ENCODE measurements at regions of chr7 and their contacts with region 1.

Region 1: GRCh38 chr7:44858161-44858560 is 10.3 kb upstream of the H2AZ2 start:
- DNase-seq: no peak
- H3K4me3 ChIP-seq: no peak overlapping the region
- H3K27ac ChIP-seq: no peak overlapping the region
- H3K4me1 ChIP-seq: peaks cover 0 to 9% (median 0%) of the 10 kb centered on the region in 4 donors
- H3K27me3 ChIP-seq: peaks cover 0 to 10% (median 0%) of the 10 kb centered on the region in 3 donors
- CTCF ChIP-seq: peak in 2 of 7 experiments; percentile 12 to 21
- EP300 ChIP-seq: no peak
- POLR2A ChIP-seq: no peak

Region 2: DNA sequence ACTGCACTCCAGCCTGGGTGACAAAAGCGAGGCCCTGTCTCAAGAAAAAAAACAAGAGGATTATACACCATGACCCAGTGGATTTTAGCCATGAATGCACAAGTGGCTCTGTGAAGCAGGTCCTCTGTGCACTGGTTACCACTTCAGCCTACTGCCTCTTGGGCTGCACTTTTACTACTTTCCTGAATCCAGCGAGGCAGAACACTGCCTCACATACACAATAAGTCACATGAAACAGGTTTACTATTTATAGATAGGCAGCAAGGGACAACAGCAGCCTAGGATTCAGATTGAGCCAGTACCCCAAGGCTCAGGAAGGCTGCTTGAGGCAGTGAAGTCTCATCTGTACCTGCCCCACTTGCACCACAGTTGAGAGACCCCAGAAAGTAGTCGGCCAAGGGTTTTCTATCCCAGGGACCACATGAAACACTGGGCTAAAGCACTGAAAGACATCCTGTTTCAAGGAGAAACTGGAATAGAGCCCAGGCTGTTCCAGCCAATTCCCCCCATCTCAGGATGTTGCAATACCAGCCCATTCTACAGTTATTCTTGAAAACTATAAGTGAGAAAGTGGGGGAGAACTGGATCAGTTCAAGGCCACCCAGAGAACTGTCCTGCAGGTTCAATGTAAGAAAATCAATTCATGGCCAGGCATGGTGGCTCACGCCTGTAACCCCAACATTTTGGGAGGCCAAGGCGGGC is 262.1 kb before region 1 on chr7:
- intact Hi-C with region 1: loop called (anchors 10 kb)
- DNase-seq: no peak
- H3K4me3 ChIP-seq: no peak overlapping the region
- H3K27ac ChIP-seq: no peak overlapping the region
- H3K4me1 ChIP-seq: no peaks in the 10 kb centered on the region
- H3K27me3 ChIP-seq: no peaks in the 10 kb centered on the region
- CTCF ChIP-seq: no peak
- EP300 ChIP-seq: no peak
- POLR2A ChIP-seq: no peak

Region 3: GRCh38 chr7:44921607-44922359 is 63.6 kb after region 1 on chr7:
- intact Hi-C with region 1: loop called (anchors 5 kb)
- DNase-seq: peak; percentile 90 to 96
- H3K4me3 ChIP-seq: no peak overlapping the region
- H3K27ac ChIP-seq: no peak overlapping the region
- H3K4me1 ChIP-seq: peaks cover 0 to 7% (median 3%) of the 10 kb centered on the region in 4 donors
- H3K27me3 ChIP-seq: no peaks in the 10 kb centered on the region
- CTCF ChIP-seq: peak in 5 of 7 experiments; percentile 52 to 92 (median 75)
- EP300 ChIP-seq: no peak
- POLR2A ChIP-seq: no peak

Region 4: DNA sequence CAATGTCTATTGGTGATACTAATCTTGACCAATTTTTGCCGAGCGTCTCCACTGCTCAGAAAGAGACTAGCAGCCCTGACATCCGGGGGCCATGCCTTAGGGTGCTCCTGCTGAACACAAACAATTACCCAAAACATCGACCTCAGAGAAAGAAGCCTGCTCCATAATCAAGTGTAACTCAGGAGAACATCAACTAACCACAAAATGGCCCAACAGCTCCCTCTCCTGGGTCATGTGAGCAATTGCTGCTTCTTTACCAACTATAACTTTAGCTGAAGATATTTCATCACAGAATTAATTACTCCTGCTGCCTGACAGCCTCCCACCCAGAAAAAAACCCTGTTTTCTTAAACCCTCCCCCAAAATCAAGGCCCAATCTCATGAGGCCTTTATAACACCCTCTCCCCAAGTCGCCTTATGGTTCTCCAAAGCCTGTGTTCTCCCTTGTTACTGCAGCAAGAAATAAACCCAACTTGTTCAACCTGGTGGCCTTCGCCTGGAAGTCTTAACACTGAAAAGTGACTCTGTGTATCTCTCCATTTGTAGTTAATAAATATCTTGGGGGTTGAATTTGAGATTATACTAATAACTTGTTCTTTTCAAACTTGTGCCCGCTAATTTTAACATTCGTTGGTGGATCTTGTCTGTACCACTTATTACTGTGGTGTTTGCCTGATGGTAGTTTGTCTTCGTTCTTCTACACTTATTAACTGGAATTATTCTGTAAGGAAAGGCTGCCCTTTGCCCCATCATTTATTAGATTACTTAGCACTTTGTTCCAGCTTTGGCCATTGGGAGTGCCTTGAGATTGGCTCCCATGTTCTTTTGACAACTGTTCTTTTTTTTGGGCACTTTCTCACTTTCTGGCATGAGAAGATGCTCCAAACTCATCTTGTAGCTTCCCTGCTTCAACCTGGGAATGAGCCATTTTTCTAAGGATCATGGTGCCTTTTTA is 278.2 kb after region 1 on chr7:
- intact Hi-C with region 1: loop called (anchors 10 kb)
- DNase-seq: peak; percentile 47 to 91
- H3K4me3 ChIP-seq: no peak overlapping the region
- H3K27ac ChIP-seq: no peak overlapping the region
- H3K4me1 ChIP-seq: no peaks in the 10 kb centered on the region
- H3K27me3 ChIP-seq: peaks cover 0 to 13% (median 0%) of the 10 kb centered on the region in 3 donors
- CTCF ChIP-seq: peak in 5 of 7 experiments; percentile 70 to 83 (median 78)
- EP300 ChIP-seq: no peak
- POLR2A ChIP-seq: no peak